ENCODE measurements at regions of chr1 and their contacts with region 1.

Region 1: GRCh38 chr1:228165372-228166169 is at the start of gene IBA57:
- DNase-seq: peak; percentile 100
- H3K4me3 Mint-ChIP-seq: peak within 1 kb of the TSS; percentile 86
- H3K27ac Mint-ChIP-seq: peak within 1 kb of the TSS; percentile 89
- H3K4me1 Mint-ChIP-seq: peaks cover 34% of the 10 kb centered on the region
- H3K27me3 Mint-ChIP-seq: no peaks in the 10 kb centered on the region
- total RNA-seq, gene IBA57: 4.5 to 5.2 TPM

Region 2: GRCh38 chr1:227999056-227999930 is 166.3 kb before region 1 on chr1:
- CTCF ChIA-PET with region 1: interaction called, 18 read pairs
- POLR2A ChIA-PET with region 1: no interaction called
- DNase-seq: peak; percentile 74
- H3K4me3 Mint-ChIP-seq: no peak overlapping the region
- H3K27ac Mint-ChIP-seq: no peak overlapping the region
- H3K4me1 Mint-ChIP-seq: no peaks in the 10 kb centered on the region
- H3K27me3 Mint-ChIP-seq: peaks cover 29% of the 10 kb centered on the region

Region 3: DNA sequence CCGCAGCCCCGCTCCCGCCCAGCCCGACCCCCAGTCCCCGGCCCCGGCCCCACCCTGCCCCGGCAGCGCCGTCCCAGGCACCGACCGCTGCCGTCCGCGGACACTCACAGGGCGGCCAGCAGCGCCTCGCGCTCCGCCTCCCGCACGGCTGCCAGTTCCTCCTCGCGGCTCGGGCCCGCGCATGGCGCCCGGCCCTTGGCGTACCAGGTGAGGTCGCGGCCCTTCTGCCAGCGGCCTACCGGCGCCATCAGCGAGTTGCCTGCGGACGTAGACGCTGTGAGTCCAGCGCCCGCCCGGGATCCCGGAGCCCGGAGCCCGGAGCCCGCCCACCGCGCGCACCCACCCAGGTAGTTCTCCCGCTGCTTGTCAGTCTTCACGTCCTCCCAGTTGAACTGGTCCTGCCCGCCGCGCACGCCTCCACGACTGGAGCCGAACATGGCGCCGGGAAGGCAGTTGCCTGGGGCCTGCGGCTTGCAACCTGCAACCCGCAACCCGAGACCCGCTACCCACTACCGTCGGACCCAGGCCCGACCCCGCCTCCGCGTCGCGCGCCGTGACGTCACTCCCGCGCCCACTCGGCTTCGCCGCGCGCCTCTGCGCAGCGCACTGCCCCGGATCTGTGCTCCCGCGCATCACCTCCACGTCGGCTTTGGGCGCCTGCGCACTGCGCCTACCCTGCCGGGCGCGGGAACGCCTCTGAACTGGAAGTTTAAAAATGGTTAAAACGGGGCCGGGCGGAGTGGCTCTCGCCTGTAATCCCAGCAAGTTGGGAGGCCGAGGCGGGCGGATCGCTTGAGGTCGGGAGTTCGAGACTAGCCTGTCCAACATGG is 62.6 kb before region 1 on chr1 and contains the start of gene C1orf35:
- CTCF ChIA-PET with region 1: interaction called, 5 read pairs
- POLR2A ChIA-PET with region 1: interaction called, 11 read pairs
- DNase-seq: peak; percentile 96
- H3K4me3 Mint-ChIP-seq: peak within 1 kb of the TSS; percentile 85
- H3K27ac Mint-ChIP-seq: peak within 1 kb of the TSS; percentile 86
- H3K4me1 Mint-ChIP-seq: peaks cover 42% of the 10 kb centered on the region
- H3K27me3 Mint-ChIP-seq: no peaks in the 10 kb centered on the region
- total RNA-seq, gene C1orf35: 17.8 to 18.9 TPM

Region 4: DNA sequence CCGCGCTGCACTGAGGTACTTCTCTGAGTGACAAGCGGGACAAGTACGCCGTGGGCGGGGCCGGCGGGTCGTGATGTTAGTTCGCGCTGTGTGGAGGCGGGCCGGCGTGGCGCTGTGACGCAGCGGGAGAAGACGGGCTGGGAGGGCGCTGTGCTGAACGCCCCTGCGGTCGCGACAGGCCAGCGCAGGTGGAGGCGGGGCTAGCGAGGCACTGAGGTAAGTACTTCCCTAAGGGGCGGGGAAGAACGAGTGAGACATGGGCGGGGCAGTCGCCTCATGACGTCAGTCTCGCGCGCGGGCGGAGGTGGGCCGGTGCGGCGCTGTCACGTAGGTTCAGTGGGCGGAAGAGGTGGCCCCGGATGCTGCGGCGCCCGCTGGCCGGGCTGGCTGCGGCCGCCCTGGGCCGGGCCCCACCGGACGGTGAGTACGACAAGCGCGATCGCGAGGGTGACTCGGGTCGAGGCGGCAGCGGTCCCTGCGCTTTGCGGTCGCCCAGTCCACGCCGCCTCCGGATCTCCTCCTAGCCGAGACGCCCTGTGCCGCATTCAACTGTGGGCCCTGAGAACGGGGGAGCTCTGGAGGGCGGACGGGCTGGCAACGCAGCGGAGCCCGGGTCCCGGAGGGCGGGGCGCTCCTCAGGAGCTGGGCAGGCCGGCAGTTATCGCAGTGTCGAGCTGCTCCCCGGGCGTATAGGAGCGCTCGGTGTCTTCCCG is 25.5 kb before region 1 on chr1 and contains the start of gene GUK1:
- CTCF ChIA-PET with region 1: interaction called, 50 read pairs
- POLR2A ChIA-PET with region 1: interaction called, 95 read pairs
- DNase-seq: peak; percentile 100
- H3K4me3 Mint-ChIP-seq: peak within 1 kb of the TSS; percentile 99
- H3K27ac Mint-ChIP-seq: peak within 1 kb of the TSS; percentile 98
- H3K4me1 Mint-ChIP-seq: peaks cover 36% of the 10 kb centered on the region
- H3K27me3 Mint-ChIP-seq: peaks cover 16% of the 10 kb centered on the region
- total RNA-seq, gene GUK1: 280 to 284 TPM

Region 5: GRCh38 chr1:228405987-228406265 is 240.4 kb after region 1 on chr1:
- CTCF ChIA-PET with region 1: no interaction called
- POLR2A ChIA-PET with region 1: interaction called, 11 read pairs
- DNase-seq: no peak
- H3K4me3 Mint-ChIP-seq: peak overlapping the region; percentile 85
- H3K27ac Mint-ChIP-seq: peak overlapping the region; percentile 90
- H3K4me1 Mint-ChIP-seq: peaks cover 61% of the 10 kb centered on the region
- H3K27me3 Mint-ChIP-seq: no peaks in the 10 kb centered on the region

Region 6: DNA sequence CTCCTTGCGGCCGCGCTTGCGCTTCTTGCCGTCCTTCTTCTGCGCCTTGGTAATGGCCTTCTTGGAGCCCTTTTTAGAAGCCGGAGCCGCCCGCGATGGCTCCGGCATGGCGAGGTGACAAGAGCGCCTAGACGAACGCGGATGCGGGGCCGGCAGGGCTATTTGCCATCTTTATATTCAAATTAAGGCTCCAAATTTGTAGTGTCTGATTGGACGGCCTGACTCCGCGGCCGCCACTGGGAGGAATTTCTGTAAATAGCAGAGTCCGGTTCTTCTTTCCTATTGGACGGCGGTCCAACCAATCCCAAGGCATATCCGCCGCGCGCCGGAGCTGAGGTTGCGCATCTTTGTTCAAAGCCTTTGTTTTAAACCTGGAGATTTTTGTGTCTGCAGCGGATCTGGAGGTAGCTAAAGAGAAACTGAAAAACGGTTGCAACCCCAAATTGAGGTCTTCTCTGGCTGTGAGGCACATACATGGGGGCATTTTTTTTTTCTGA is 299.0 kb after region 1 on chr1:
- CTCF ChIA-PET with region 1: interaction called, 7 read pairs
- POLR2A ChIA-PET with region 1: interaction called, 15 read pairs
- DNase-seq: peak; percentile 96
- H3K4me3 Mint-ChIP-seq: peak overlapping the region; percentile 76
- H3K27ac Mint-ChIP-seq: peak overlapping the region; percentile 91
- H3K4me1 Mint-ChIP-seq: peaks cover 68% of the 10 kb centered on the region
- H3K27me3 Mint-ChIP-seq: no peaks in the 10 kb centered on the region

Measured in activated CD4-positive, alpha-beta memory T cell treated with anti-CD3 and anti-CD28 coated beads, Interleukin-2, amount 10 ng/mL, durations not matched to agents 7 days and 5 days (primary cell).